ENCODE measurements at regions of chr5 and their contacts with region 1.

Region 1: GRCh38 chr5:180868960-180869359 is 7.9 kb upstream of the ZFP62 start:
- DNase-seq: peak; percentile 66
- ATAC-seq: peak; percentile 79
- H3K4me3 ChIP-seq: no peak overlapping the region
- H3K27ac ChIP-seq: no peak overlapping the region
- H3K4me1 ChIP-seq: no peaks in the 10 kb centered on the region
- H3K27me3 ChIP-seq: 0 out of 5 replicates have a peak, but pooled peaks cover 0 to 8% of the 10 kb centered on the region in 2 experiments
- CTCF ChIP-seq: peak; percentile 89
- EP300 ChIP-seq: no peak
- POLR2A ChIP-seq: no peak
- RAD21 ChIP-seq: peak; percentile 77

Region 2: GRCh38 chr5:181159286-181159829 is 290.4 kb after region 1 on chr5:
- CTCF ChIA-PET with region 1: interaction called, 11 read pairs
- POLR2A ChIA-PET with region 1: no interaction called
- in situ Hi-C with region 1: loop called (anchors 5 kb)
- intact Hi-C with region 1: loop called (anchors 10 kb)
- DNase-seq: peak; percentile 67
- ATAC-seq: peak; percentile 93
- H3K4me3 ChIP-seq: peak overlapping the region in 1 of 3 experiments; percentile 62; a peak in 1 of 6 replicates
- H3K27ac ChIP-seq: no peak overlapping the region
- H3K4me1 ChIP-seq: peaks cover 32% of the 10 kb centered on the region
- H3K27me3 ChIP-seq: peaks cover 0 to 11% of the 10 kb centered on the region in 2 experiments; a peak in 2 of 5 replicates
- CTCF ChIP-seq: peak; percentile 90
- EP300 ChIP-seq: no peak
- POLR2A ChIP-seq: no peak
- RAD21 ChIP-seq: peak; percentile 67